HepG2 (cell line): ENCODE measurements at regions of chr13 and their contacts with region 1.

Region 1: DNA sequence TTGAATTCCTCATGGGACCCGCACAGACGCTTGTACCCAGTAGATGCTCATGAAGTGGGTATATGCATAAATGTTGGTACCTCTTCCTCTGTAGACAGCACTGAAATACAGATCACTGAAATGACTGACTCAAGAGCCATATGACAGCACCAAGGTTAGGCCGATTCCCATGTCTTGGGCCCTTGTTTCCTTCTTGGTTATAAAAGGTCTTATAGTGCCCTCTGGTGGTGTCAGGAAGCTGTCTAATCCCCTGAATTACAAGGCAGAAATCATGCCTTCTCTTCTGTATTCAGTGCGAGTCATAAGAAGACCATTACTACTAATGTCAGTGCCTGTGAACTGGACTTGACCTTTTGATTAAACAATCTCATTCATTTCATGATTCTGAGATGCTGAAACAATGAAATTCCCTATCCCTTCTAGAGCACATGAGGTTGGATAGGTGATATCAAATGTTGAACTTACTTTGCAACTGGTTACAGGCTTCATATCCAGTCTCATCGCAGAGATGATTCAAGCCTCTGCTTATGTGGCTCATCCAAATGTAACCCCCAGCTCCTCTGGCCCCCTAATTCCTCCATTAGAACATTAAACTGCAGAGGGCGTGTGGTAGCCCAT is 59.7 kb downstream of the SPATA13 start:
- DNase-seq: peak; percentile 75
- ATAC-seq: peak; percentile 65
- H3K4me3 ChIP-seq: no peak overlapping the region
- H3K27ac ChIP-seq: peak overlapping the region; percentile 45
- H3K4me1 ChIP-seq: peaks cover 66% of the 10 kb centered on the region
- H3K27me3 ChIP-seq: no peaks in the 10 kb centered on the region
- CTCF ChIP-seq: peak; percentile 86
- EP300 ChIP-seq: no peak
- POLR2A ChIP-seq: no peak
- RAD21 ChIP-seq: peak; percentile 77

Region 2: DNA sequence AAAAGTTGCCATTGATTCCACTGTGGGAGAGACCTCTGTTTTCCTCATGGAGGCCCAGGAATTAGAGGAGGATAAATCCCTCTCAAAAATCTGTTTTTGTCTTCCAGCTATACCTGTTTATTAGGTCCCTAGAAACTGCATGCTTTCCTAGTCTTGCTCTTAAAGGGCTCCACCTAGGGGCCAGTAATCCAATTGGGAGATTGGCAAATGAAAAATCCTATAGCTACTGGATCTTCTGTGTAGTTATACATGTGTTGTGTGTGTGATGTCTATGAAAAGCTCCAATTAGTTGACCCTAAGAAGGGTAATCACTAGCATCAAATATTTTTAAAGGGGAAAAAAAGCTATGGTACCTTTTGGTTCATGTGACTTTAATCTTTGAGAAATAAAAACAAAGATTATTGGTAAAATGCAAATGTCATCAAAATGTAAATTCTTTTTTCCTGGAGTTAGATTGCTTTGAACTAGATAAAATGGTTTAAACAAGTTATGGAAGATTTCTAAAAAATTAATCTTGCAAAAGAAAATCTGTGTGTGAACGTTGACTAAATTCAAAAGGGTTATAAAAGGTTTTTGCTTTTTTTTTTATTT is 259.5 kb before region 1 on chr13:
- CTCF ChIA-PET with region 1: no interaction called
- POLR2A ChIA-PET with region 1: no interaction called
- in situ Hi-C with region 1: no loop called
- intact Hi-C with region 1: no loop called
- DNase-seq: peak; percentile 30
- ATAC-seq: peak; percentile 76; the same call in 2 of the 3 replicates
- H3K4me3 ChIP-seq: no peak overlapping the region
- H3K27ac ChIP-seq: no peak overlapping the region
- H3K4me1 ChIP-seq: no peaks in the 10 kb centered on the region
- H3K27me3 ChIP-seq: peaks cover 0 to 11% of the 10 kb centered on the region in 2 experiments; a peak in 1 of 5 replicates
- CTCF ChIP-seq: peak; percentile 56
- EP300 ChIP-seq: no peak
- POLR2A ChIP-seq: no peak
- RAD21 ChIP-seq: no peak

Region 3: GRCh38 chr13:24020375-24020830 is 199.8 kb before region 1 on chr13:
- CTCF ChIA-PET with region 1: interaction called, 38 read pairs
- POLR2A ChIA-PET with region 1: interaction called, 4 read pairs
- in situ Hi-C with region 1: loop called (anchors 5 kb)
- intact Hi-C with region 1: loop called (anchors 1 kb)
- DNase-seq: peak; percentile 51
- ATAC-seq: peak; percentile 67
- H3K4me3 ChIP-seq: no peak overlapping the region
- H3K27ac ChIP-seq: no peak overlapping the region
- H3K4me1 ChIP-seq: no peaks in the 10 kb centered on the region
- H3K27me3 ChIP-seq: peaks cover 0 to 6% of the 10 kb centered on the region in 2 experiments; a peak in 2 of 5 replicates
- CTCF ChIP-seq: peak; percentile 68
- EP300 ChIP-seq: no peak
- POLR2A ChIP-seq: no peak
- RAD21 ChIP-seq: peak; percentile 69

Region 4: GRCh38 chr13:24053519-24054251 is 166.5 kb before region 1 on chr13:
- CTCF ChIA-PET with region 1: interaction called, 53 read pairs
- POLR2A ChIA-PET with region 1: interaction called, 5 read pairs
- in situ Hi-C with region 1: loop called (anchors 10 kb)
- intact Hi-C with region 1: loop called (anchors 1 kb)
- DNase-seq: peak; percentile 67
- ATAC-seq: peak; percentile 96
- H3K4me3 ChIP-seq: no peak overlapping the region
- H3K27ac ChIP-seq: no peak overlapping the region
- H3K4me1 ChIP-seq: peaks cover 17% of the 10 kb centered on the region
- H3K27me3 ChIP-seq: peaks cover 0 to 7% of the 10 kb centered on the region in 2 experiments; a peak in 1 of 5 replicates
- CTCF ChIP-seq: peak; percentile 89
- EP300 ChIP-seq: no peak
- POLR2A ChIP-seq: no peak
- RAD21 ChIP-seq: peak; percentile 86

Region 5: DNA sequence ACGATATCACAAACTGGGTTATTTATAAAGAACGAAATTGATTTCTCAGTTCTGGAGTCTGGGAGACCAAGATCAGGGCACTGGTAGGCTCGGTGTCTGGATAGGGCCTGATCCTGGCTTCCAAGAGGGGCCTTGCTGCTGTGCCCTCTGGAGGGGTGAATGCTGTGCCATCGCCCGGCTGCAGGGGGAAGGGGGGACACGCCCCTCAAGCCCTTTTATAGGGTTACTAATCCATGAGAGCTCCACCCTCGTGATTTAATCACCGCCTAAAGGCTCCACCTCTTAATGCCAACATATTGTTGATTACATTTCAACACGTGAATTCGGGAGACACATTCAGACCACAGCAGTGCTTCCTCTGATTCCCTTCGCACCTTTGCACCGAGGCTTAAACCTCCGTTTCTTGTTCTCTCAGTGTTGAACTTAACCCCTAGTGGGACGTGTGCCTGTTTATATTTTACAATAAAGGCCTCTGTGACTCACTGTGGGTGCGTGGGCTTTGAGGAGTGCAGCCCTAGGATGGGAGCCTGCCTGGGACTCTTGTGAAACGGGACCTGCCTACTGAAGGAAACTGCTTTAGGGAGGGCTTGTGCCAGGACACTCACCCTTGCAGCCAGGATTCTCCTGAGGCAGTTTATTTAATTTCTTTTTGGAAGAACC is 112.1 kb before region 1 on chr13:
- CTCF ChIA-PET with region 1: no interaction called
- POLR2A ChIA-PET with region 1: no interaction called
- in situ Hi-C with region 1: no loop called
- intact Hi-C with region 1: loop called (anchors 5 kb)
- DNase-seq: no peak
- ATAC-seq: no peak
- H3K4me3 ChIP-seq: no peak overlapping the region
- H3K27ac ChIP-seq: no peak overlapping the region
- H3K4me1 ChIP-seq: peaks cover 30% of the 10 kb centered on the region
- H3K27me3 ChIP-seq: peaks cover 0 to 16% of the 10 kb centered on the region in 2 experiments; a peak in 3 of 5 replicates
- CTCF ChIP-seq: no peak
- EP300 ChIP-seq: no peak
- POLR2A ChIP-seq: no peak
- RAD21 ChIP-seq: no peak

Region 6: GRCh38 chr13:24183741-24184182 is 36.4 kb before region 1 on chr13:
- CTCF ChIA-PET with region 1: no interaction called
- POLR2A ChIA-PET with region 1: interaction called, 17 read pairs
- in situ Hi-C with region 1: no loop called
- intact Hi-C with region 1: loop called (anchors 2 kb)
- DNase-seq: peak; percentile 85
- ATAC-seq: peak; percentile 76
- H3K4me3 ChIP-seq: peak overlapping the region; percentile 48 to 60 (median 52); a peak in 5 of 6 replicates
- H3K27ac ChIP-seq: peak overlapping the region; percentile 98
- H3K4me1 ChIP-seq: peaks cover 84% of the 10 kb centered on the region
- H3K27me3 ChIP-seq: no peaks in the 10 kb centered on the region
- CTCF ChIP-seq: no peak
- EP300 ChIP-seq: peak; percentile 13 to 52; a peak in 1 of 4 replicates
- POLR2A ChIP-seq: peak; percentile 35 to 54; a peak in 2 of 4 replicates
- RAD21 ChIP-seq: no peak